ENCODE measurements at regions of chr20 and their contacts with region 1.

Region 1: DNA sequence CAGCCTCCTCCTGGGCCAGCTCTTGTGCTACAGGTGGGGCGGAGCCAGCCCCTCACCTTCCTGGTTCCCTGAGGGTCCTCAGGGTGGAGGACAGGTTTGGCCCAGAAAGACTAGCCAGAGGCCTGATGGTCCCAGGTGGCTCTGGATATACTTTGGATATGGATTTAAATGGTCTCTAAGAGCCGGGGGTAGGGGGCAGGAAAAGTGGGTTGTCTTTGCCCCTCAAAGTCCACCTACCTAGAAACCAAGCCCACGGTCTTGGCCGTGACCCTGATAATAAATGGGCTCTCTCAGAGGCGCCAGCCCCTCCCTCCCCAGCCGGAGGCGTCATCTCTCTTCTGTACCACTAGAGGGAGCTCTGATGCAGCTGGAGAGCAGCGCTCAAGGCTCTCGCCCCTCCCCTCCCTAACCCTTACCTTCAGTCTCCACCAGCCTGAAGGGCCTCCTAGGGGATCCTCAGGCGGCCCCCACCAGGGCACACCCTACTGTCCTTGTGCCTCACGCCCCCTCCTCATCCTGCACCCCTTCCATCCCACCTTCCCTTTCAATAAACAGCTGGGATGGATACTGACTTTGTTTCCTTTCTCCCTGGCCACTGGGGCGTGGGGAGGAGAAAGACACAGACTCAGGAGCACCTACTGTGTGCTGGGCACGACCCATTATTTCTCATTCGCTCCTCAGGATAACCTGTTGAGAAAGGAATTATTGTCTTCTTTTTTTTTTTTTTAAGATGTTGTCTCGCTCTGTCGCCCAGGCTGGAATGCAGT is 7.6 kb downstream of the NRSN2 start:
- DNase-seq: peak; percentile 85
- H3K4me3 Mint-ChIP-seq: no peak overlapping the region
- H3K27ac Mint-ChIP-seq: no peak overlapping the region
- H3K4me1 Mint-ChIP-seq: peaks cover 4% of the 10 kb centered on the region
- H3K27me3 Mint-ChIP-seq: no peaks in the 10 kb centered on the region

Region 2: DNA sequence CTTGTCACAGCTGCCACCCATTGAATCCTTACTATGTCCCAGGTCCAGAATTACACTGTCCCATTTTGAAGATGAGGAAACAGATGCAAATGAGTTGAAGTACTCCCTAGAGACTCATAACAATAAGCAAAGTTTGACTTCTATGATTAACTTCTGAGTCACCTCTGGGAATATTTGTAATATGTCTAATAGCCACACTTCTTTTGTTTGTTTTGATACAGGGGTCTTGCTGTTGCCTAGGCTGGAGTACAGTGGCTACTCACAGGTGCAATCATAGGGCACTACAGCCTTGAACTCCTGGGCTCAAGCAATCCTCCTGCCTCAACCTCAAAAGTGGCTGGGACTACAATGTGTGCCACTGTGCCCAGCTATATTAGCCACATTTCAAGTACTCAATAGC is 40.5 kb before region 1 on chr20:
- CTCF ChIA-PET with region 1: no interaction called
- intact Hi-C with region 1: no loop called
- DNase-seq: no peak
- H3K4me3 Mint-ChIP-seq: no peak overlapping the region
- H3K27ac Mint-ChIP-seq: no peak overlapping the region
- H3K4me1 Mint-ChIP-seq: peaks cover 11% of the 10 kb centered on the region
- H3K27me3 Mint-ChIP-seq: no peaks in the 10 kb centered on the region

Region 3: DNA sequence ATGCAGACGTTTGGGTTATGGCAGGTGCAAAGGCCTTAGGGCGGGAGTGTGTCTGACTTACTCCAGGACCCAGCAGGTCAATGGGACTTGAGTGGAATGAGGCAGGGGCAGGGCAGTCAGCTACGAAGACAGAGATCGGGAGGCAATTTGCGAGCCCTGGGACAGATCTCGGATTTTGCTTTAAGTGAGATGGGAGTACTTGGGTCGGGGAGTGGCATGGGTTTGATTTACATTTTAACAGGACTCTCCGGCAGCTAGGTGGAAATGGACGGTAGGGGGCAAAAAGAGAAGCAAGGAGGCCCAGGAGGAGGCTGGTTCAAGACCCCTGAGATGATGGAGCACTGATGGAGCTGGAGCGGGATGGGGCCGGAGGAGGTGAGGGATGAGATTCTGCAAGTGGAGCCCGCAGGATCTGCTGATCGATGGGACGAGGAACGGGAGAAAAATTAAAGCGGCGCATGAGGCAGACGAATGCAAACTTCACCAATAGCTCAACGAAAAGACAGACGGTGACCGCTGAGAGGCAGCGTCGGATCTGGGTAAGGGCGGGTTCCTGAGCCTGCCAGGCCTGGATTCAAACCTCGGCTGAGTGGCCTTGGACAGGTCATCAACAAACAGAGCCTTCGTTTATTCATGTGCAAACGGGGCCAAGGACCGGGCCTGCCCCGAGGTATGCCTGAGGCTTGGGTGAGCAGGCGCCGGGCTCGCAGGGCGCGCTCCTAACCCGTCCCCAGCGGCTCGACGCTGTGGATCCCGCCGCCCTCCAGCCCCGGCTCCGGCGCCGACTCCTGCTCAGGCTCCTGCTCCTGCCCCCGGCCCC is 52.9 kb after region 1 on chr20:
- CTCF ChIA-PET with region 1: interaction called, 3 read pairs
- intact Hi-C with region 1: loop called (anchors 2 kb)
- DNase-seq: peak; percentile 74
- H3K4me3 Mint-ChIP-seq: peak overlapping the region; percentile 86
- H3K27ac Mint-ChIP-seq: peak overlapping the region; percentile 85
- H3K4me1 Mint-ChIP-seq: peaks cover 43% of the 10 kb centered on the region
- H3K27me3 Mint-ChIP-seq: no peaks in the 10 kb centered on the region

Region 4: DNA sequence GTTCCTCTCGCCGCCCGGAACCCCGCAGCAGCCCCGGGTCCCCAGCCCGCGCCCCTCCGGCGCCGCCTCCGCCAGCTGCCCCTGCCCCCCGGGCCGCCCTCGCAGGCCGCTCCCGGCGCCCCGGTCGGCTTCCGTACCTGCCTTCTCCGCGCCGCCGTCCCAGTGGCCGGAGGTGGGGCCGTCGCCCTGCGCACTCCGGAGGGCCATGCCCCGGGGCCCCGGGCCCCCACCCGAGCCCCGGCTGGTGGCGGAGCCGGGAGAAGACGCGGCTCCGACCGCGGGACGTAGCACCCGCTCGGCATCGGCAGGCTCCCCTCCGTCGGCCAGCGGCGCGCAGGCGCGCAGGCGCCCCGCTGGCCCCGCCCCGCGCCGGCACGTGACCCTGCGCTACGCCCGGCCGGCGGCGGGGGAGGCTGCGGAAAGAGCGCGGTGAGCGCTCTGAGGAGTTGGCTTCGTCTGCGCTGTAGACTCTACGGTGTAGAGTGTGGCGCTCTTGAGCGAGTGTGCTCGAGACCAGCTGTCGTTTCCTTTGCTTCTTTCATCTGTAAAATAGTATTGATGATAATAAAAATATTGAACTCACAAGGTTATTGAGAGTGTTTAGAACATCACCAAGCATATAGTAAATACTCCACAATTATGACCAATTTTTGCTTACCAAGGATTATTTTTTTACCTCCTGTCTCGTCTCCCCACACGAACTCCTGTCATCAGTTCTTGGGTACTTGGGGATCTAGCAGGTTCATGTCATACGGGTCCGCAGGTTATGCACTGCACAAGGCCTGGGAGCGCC is 107.9 kb after region 1 on chr20 and contains the start of gene TBC1D20:
- CTCF ChIA-PET with region 1: no interaction called
- intact Hi-C with region 1: loop called (anchors 5 kb)
- DNase-seq: peak; percentile 86
- H3K4me3 Mint-ChIP-seq: peak within 1 kb of the TSS; percentile 96
- H3K27ac Mint-ChIP-seq: peak within 1 kb of the TSS; percentile 86
- H3K4me1 Mint-ChIP-seq: peaks cover 41% of the 10 kb centered on the region
- H3K27me3 Mint-ChIP-seq: no peaks in the 10 kb centered on the region
- total RNA-seq, gene TBC1D20: 16.2 to 17.4 TPM

Region 5: GRCh38 chr20:561437-562231 is 207.2 kb after region 1 on chr20:
- CTCF ChIA-PET with region 1: no interaction called
- intact Hi-C with region 1: loop called (anchors 1 kb)
- DNase-seq: peak; percentile 77
- H3K4me3 Mint-ChIP-seq: no peak overlapping the region
- H3K27ac Mint-ChIP-seq: no peak overlapping the region
- H3K4me1 Mint-ChIP-seq: no peaks in the 10 kb centered on the region
- H3K27me3 Mint-ChIP-seq: peaks cover 11% of the 10 kb centered on the region

Region 6: DNA sequence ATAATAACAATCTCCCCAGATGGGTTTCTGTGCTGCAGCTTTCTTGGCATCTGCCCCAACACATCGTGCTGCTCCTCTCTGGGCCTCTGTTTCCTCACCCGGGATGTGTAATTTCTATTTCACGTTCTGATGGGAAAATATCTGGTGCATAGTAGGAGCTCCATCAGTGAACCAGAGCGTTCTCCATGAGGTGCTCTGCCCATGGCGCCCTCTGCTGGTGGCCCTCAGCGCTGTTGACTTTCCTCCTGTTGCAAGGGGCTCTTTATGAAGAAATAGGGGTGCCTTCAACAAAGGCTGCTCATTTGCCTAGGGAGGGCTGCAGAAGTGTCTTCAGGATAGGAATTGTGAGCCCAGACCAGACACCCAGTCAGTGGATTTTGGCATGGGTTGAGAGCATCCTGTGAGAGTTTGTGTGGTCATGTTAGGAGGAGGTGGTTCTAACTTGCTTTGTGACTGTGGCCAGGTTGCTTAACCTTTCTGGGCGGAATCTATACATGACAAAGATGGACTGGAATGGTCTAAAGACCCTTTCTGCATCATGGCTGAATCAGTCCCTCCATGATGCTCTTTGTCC is 313.0 kb after region 1 on chr20:
- CTCF ChIA-PET with region 1: interaction called, 3 read pairs
- intact Hi-C with region 1: loop called (anchors 1 kb)
- DNase-seq: peak; percentile 76
- H3K4me3 Mint-ChIP-seq: no peak overlapping the region
- H3K27ac Mint-ChIP-seq: no peak overlapping the region
- H3K4me1 Mint-ChIP-seq: peaks cover 4% of the 10 kb centered on the region
- H3K27me3 Mint-ChIP-seq: peaks cover 61% of the 10 kb centered on the region

Measured in activated naive CD4-positive, alpha-beta T cell treated with anti-CD3 and anti-CD28 coated beads for 36 hours (primary cell).